GM13977 (cell line): ENCODE measurements at regions of chr17 and their contacts with region 1.

Region 1: DNA sequence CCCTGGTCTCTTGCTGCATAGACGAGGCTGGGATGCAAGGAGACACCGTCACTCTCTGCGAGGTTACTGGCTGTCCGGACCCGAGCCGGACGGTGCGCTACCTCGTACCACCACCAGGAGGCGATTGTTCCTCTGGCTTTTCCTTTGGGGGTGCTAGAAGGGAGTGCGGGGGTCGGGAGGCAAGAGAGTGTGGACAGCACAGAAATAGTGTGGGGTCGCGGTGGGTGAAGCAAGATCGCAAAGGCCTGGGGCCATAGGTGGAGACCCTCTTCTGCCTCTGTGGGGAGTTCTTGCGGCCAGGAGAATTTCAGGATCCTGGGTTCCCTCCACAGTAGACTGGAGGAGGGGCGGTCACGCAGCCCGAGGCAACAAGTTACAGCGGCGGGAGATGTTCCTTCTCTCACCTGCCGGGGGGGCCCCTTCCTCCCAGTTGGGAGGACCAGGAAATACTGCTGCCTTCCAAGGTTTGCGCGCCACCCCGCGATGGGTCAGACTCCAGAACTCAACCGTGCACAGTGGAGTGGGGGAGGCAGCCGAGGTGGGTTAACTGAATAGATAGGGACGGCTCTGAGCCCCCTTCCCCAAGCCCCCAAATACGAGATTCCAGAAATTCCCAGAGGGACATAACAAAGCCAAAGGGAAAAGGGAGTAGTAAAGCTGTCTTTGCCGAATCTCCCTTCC is 6.9 kb downstream of the PHOSPHO1 start:
- DNase-seq: peak; percentile 81
- CTCF ChIP-seq: peak; percentile 86

Region 2: DNA sequence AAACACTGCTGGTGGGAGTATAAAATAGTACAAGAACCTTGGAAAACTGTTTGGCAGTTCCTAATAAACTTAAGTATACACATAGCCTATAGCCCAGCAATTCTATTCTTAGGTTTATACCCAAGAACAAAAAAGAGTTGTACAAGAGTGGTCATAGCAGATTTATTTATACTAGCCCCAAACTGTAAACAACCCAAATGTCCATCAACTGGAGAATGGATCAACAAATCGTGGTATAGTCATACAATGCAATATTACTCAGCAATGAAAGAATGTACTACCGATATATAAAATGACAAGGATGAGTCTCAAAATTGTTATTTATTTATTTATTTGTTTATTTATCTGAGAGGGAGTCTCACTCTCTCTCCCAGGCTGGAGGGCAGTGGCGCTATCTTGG is 36.4 kb before region 1 on chr17:
- in situ Hi-C with region 1: loop called (anchors 5 kb)
- DNase-seq: no peak
- CTCF ChIP-seq: no peak